ENCODE measurements at regions of chr17 and their contacts with region 1.

Region 1: DNA sequence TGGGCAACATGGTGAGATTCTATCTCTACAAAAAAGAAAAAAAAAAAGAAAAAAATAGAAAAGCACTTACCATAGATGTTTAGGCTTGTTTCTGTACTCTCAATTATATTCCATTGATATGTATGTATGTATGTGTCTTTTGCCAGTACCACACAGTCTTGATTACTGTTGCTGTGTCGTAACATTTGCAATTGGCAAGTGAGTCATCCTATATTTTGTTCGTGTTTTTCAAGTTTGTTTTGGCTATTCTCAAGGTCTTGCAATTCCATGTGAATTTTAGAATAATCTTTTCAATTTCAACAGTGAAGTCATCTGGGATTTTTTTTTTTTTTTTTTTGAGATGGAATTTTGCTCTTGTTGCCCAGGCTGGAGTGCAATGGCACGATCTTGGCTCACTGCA is 19.3 kb downstream of the SPECC1 start:
- DNase-seq: no peak
- H3K4me3 ChIP-seq: no peak overlapping the region
- H3K27ac ChIP-seq: no peak overlapping the region
- H3K27me3 ChIP-seq: no peaks in the 10 kb centered on the region
- CTCF ChIP-seq: no peak

Region 2: GRCh38 chr17:19867314-19868078 is 160.9 kb before region 1 on chr17 and contains the start of gene ULK2:
- intact Hi-C with region 1: no loop called
- DNase-seq: peak in 8 of 10 donors; percentile 42 to 85 (median 52)
- H3K4me3 ChIP-seq: peak within 1 kb of the TSS; percentile 70 to 98 (median 88)
- H3K27ac ChIP-seq: peak within 1 kb of the TSS; percentile 7 to 98 (median 92)
- H3K27me3 ChIP-seq: no peaks in the 10 kb centered on the region
- CTCF ChIP-seq: peak in 34 of 56 donors; percentile 9 to 61 (median 30)
- total RNA-seq, gene ULK2: 44.7 to 102 (median 68.5) TPM

Region 3: GRCh38 chr17:20063665-20064648 is 35.5 kb after region 1 on chr17:
- intact Hi-C with region 1: loop called in 1 of 2 experiments (anchors 5 kb)
- DNase-seq: peak in 9 of 10 donors; percentile 43 to 89 (median 70)
- H3K4me3 ChIP-seq: peak overlapping the region in 31 of 59 donors; percentile 1 to 44 (median 22)
- H3K27ac ChIP-seq: peak overlapping the region; percentile 39 to 92 (median 82)
- H3K27me3 ChIP-seq: no peaks in the 10 kb centered on the region
- CTCF ChIP-seq: peak in 2 of 56 donors; percentile 6 to 17

Measured in dorsolateral prefrontal cortex (tissue), 120 donors.